HCT116 (cell line): ENCODE measurements at regions of chr19 and their contacts with region 1.

Region 1: DNA sequence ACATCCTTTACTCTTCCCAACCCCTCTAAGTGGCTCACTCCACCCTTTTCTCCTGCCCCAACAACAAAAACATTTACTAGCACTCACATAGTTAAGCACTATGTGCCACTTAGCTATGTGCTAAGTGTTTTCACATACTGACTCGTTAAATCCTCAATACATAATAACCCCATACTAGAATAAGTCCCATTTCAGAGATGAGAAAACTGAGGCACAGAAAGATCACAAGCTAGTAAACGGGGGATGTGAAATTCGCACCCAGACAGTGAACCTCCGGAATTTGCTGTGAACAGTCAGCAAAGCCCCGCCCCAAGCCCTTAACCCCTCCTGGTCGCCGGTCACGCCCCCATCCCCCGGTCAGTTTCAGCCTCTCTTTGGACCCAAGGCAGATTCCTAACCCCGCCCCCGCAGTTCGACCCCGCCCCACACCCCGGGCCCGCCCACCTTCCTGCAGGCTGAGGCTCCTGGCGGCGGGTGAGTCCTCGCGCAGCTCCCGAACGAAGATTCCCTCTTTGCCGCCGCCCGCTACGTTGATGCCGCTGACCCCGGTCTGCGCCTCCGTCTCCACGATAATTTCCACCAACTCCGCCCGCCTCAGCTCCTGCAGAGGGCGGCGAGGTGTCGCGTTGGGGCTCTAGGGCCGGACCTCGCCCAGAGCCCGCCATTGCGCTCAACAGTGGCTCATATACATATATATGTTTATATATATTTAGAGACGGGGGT is 9.8 kb downstream of the PRX start:
- DNase-seq: peak; percentile 86
- ATAC-seq: peak; percentile 86
- H3K4me3 ChIP-seq: peak overlapping the region; percentile 59 to 69
- H3K27ac ChIP-seq: peak overlapping the region; percentile 83
- H3K4me1 ChIP-seq: peaks cover 12 to 35% of the 10 kb centered on the region in 2 experiments; a peak in 3 of 4 replicates
- H3K27me3 ChIP-seq: no peaks in the 10 kb centered on the region
- CTCF ChIP-seq: no peak
- POLR2A ChIP-seq: no peak
- RAD21 ChIP-seq: no peak

Region 2: GRCh38 chr19:40266119-40266518 is 137.3 kb before region 1 on chr19:
- CTCF ChIA-PET with region 1: no interaction called
- POLR2A ChIA-PET with region 1: no interaction called
- RAD21 ChIA-PET with region 1: no interaction called
- intact Hi-C with region 1: no loop called
- DNase-seq: no peak
- ATAC-seq: no peak
- H3K4me3 ChIP-seq: no peak overlapping the region
- H3K27ac ChIP-seq: no peak overlapping the region
- H3K4me1 ChIP-seq: no peaks in the 10 kb centered on the region
- H3K27me3 ChIP-seq: no peaks in the 10 kb centered on the region
- CTCF ChIP-seq: no peak
- POLR2A ChIP-seq: no peak
- RAD21 ChIP-seq: no peak

Region 3: DNA sequence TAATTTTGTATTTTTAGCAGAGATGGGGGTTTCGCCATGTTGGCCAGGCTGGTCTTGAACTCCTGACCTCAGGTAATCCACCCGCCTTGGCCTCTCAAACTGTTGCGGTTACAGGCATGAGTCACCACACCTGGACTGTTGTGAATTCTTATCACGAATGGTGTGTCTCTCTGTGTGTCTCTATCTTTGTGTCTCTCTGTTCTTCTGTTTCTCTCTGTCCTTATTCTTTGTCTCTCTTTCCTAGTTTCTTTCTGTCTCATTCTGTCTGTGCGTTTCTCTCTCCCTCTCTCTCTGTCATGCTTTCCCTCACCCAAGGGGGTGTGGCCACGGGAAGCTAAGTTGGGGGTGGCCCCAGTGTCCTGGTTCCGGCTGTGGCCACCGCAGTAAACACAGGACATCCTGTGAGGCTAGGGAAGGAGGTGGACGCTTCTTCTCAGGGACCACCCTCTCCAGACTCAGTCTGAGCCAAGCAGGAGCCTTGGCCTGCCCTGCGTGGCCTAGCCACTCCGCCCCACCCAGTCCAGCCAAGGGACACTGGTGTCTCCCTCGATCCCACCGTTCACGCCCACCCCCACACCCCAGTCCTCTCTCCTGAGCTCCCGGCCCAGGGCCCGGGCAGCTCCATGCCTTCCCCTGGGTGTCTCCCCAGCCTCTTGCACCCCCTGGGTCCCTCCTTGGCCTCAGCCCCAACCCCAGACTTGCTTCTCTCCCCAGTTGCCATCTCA is 13.7 kb after region 1 on chr19:
- CTCF ChIA-PET with region 1: interaction called, 9 read pairs
- POLR2A ChIA-PET with region 1: interaction called, 14 read pairs
- RAD21 ChIA-PET with region 1: interaction called in 1 of 2 experiments, 3 read pairs
- intact Hi-C with region 1: loop called (anchors 1 kb)
- DNase-seq: no peak
- ATAC-seq: peak; percentile 47
- H3K4me3 ChIP-seq: peak overlapping the region; percentile 17 to 49; a peak in 3 of 4 replicates
- H3K27ac ChIP-seq: peak overlapping the region; percentile 68
- H3K4me1 ChIP-seq: peaks cover 40 to 79% of the 10 kb centered on the region in 2 experiments
- H3K27me3 ChIP-seq: no peaks in the 10 kb centered on the region
- CTCF ChIP-seq: no peak
- POLR2A ChIP-seq: no peak
- RAD21 ChIP-seq: no peak